ENCODE measurements at regions of chr3 and their contacts with region 1.

Region 1: GRCh38 chr3:197270558-197271317 is 27.7 kb downstream of the DLG1 start:
- DNase-seq: no peak
- ATAC-seq: no peak
- H3K4me3 ChIP-seq: no peak overlapping the region
- H3K27ac ChIP-seq: no peak overlapping the region
- H3K4me1 ChIP-seq: no peaks in the 10 kb centered on the region
- H3K27me3 ChIP-seq: no peaks in the 10 kb centered on the region
- CTCF ChIP-seq: no peak
- POLR2A ChIP-seq: no peak
- RAD21 ChIP-seq: no peak

Region 2: GRCh38 chr3:197511130-197511529 is 240.4 kb after region 1 on chr3:
- CTCF ChIA-PET with region 1: no interaction called
- POLR2A ChIA-PET with region 1: no interaction called
- RAD21 ChIA-PET with region 1: no interaction called
- intact Hi-C with region 1: loop called (anchors 5 kb)
- DNase-seq: no peak
- ATAC-seq: no peak
- H3K4me3 ChIP-seq: no peak overlapping the region
- H3K27ac ChIP-seq: no peak overlapping the region
- H3K4me1 ChIP-seq: peaks cover under 1 to 12% of the 10 kb centered on the region in 2 experiments; a peak in 3 of 4 replicates
- H3K27me3 ChIP-seq: no peaks in the 10 kb centered on the region
- CTCF ChIP-seq: no peak
- POLR2A ChIP-seq: no peak
- RAD21 ChIP-seq: no peak